ENCODE measurements at regions of chr17 and their contacts with region 1.

Region 1: DNA sequence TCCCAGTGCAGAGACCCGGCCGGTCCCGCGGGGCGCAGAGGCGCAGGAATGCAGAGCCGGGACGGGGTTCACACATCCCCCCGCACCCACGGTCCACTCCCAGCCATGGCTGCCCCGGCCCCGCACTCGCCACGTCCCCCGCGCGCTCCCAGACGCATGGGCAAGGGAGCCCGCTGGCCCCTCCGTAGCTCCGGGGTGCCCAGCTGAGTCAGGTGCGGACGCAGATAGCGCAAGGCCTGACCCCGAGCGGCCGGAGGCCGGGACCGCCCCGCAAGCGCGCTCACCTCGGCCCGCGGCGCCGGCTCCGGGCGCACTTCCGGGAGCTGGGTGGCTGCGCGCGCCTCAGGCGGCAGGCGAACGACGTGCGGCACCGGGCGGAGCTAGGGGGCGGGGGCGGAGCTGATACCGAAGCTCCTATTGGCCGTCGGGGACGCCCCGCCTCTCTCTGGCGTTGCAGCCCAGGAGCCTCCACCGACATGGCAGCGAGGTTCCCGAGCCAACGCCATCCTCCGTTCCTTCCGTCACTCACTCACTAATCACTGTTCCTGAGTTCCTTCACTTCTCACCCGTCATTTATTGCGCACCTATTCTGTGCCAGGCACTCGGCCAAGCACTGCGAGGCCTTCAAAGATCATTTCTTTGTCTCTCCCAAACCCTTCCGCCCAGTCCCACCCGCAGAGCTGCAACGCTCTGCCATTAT is at the start of gene ZNF18:
- DNase-seq: peak; percentile 94
- H3K4me3 Mint-ChIP-seq: peak within 1 kb of the TSS; percentile 94
- H3K27ac Mint-ChIP-seq: peak within 1 kb of the TSS; percentile 89
- H3K4me1 Mint-ChIP-seq: peaks cover 10% of the 10 kb centered on the region
- H3K27me3 Mint-ChIP-seq: no peaks in the 10 kb centered on the region
- total RNA-seq, gene ZNF18: 6.1 and 6.8 TPM in 2 replicates

Region 2: GRCh38 chr17:11712445-11712844 is 284.9 kb before region 1 on chr17:
- intact Hi-C with region 1: loop called (anchors 5 kb)
- DNase-seq: no peak
- H3K4me3 Mint-ChIP-seq: no peak overlapping the region
- H3K27ac Mint-ChIP-seq: no peak overlapping the region
- H3K4me1 Mint-ChIP-seq: no peaks in the 10 kb centered on the region
- H3K27me3 Mint-ChIP-seq: no peaks in the 10 kb centered on the region

Region 3: DNA sequence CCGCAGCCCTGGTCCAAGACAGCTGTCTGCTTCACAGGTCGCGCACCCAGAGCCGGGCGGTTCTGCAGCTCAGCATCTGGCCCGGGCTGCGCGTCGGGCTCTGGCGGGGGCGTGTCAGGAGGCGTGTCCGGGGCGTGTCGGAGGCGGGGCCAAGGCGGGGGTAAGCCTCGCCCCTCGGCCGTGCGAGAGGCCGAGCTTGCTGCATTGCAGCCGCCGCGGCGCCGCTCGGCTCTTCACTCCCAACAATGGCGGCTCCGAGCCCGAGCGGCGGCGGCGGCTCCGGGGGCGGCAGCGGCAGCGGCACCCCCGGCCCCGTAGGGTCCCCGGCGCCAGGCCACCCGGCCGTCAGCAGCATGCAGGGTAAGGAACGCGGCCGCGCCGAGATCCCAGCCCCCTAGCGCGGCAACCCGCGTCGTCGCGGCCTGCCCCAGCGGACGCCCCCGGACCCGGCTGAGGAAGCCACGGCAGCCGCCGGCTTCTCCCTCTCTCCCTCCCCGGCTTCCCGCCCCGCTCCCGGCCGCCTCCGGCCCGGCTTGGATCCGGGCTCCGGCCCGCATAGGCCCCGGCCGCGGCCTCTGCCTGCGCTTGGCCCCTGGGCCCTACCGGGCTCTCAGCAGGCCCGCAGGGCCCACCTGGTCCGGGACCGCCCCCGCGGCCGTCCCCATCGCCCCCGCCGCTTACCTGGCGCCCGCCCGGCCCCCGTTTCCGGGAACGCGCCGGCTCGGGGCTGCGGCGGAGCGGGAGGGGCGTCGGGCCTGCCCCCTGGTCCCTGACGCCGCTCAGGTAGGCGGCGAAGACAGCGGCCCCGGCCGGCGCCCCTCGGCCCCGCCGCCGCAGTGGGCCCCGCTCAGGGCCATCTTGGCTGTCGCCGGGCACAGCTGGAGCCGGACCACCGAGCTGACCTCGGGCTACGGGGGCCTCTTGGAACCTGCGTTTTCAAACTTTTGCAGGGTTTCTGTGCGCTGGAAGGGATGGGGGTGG is 23.6 kb after region 1 on chr17 and contains the start of gene MAP2K4:
- intact Hi-C with region 1: loop called (anchors 1 kb)
- DNase-seq: peak; percentile 91
- H3K4me3 Mint-ChIP-seq: peak within 1 kb of the TSS; percentile 72
- H3K27ac Mint-ChIP-seq: peak within 1 kb of the TSS; percentile 38
- H3K4me1 Mint-ChIP-seq: peaks cover 36% of the 10 kb centered on the region
- H3K27me3 Mint-ChIP-seq: peaks cover 14% of the 10 kb centered on the region
- total RNA-seq, gene MAP2K4: 32.5 and 32.6 TPM in 2 replicates

Region 4: DNA sequence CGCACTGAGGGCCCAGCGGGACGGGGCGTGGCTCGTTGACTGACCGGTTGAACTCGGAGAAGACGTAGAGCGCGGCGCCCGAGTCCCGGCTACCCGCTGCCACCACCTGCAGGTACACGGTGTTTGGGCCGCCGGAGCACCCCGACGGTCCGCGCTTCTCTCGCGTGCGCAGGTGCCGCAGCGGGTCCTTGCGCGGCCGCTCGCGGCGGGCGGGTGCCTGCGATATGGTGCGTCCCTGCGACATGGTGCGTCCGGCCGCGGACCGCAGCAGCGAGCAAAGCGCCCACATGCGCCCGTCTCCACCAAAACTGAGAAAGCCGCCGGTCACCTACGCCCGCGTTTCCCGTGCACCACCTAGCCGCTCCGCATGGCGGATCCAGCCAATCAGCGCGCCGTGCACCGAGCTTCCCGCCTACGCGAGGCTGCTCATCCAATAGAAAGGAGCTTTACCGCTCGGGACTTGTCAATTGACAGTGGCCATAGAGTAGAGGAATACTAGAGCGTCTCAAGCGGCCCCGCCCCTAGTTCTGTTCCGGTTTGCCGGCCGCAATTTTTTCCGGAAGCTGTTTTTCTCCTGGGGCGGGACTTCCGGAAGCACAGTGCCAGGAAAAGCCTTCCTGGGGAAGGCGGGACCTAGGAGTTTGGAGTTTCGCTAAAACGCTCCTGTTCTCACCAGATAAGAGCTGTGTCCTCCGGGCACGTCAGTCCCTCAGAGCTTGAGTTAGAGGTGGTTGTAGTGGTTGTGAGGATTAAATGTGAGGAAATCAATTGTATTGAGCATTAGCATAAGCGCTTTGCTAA is 1020.6 kb after region 1 on chr17 and contains the start of gene ELAC2:
- intact Hi-C with region 1: loop called (anchors 1 kb)
- DNase-seq: peak; percentile 97
- H3K4me3 Mint-ChIP-seq: peak within 1 kb of the TSS; percentile 92
- H3K27ac Mint-ChIP-seq: peak within 1 kb of the TSS; percentile 91
- H3K4me1 Mint-ChIP-seq: peaks cover 26% of the 10 kb centered on the region
- H3K27me3 Mint-ChIP-seq: no peaks in the 10 kb centered on the region
- total RNA-seq, gene ELAC2: 80.7 and 91.2 TPM in 2 replicates